ENCODE measurements at regions of chr17 and their contacts with region 1.

Region 1: DNA sequence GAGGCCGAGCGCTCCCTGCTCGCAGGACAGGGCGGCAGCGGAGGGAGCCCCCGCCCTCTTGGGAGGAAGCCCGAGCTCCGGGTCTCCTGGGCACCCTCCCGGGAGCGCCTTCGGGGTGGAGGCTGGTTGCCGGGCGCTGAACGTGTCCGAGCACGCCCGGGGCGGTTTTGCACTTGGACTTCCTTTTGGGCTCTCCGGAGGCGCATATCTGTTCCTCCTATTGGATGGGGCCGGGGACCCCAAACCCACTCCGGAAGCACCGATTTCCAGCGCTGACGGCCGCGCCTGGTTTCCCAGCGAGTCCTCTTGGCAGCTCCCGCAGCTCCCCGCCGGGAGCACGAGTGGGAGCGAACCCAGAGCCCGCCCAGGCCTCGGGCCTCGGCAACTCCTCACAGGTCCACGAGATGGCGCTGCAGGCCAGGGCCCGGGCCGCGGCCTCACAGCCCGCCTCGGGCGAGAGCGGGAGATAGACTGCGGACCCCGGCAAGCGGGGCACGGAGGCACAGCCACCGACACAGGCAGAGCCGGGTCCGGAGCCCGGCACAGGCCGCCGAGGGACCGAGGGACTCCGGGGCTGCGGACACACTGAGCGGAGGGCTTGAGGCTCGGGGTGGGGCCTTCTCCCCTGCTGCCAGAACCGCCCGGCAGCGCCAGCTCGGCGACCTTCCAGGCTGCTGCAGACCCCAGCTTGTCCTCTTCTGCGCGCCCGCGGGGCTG is 12.7 kb downstream of the TBX2 start:
- DNase-seq: peak; percentile 78
- ATAC-seq: peak; percentile 74
- H3K4me3 Mint-ChIP-seq: peak overlapping the region; percentile 46
- H3K27ac Mint-ChIP-seq: no peak overlapping the region
- H3K4me1 Mint-ChIP-seq: peaks cover 15% of the 10 kb centered on the region
- H3K27me3 Mint-ChIP-seq: peaks cover 39% of the 10 kb centered on the region

Region 2: GRCh38 chr17:61399131-61400057 is 12.9 kb before region 1 on chr17 and contains the start of gene TBX2:
- CTCF ChIA-PET with region 1: interaction called, 10 read pairs
- DNase-seq: no peak
- ATAC-seq: no peak
- H3K4me3 Mint-ChIP-seq: peak within 1 kb of the TSS; percentile 62
- H3K27ac Mint-ChIP-seq: peak within 1 kb of the TSS; percentile 68
- H3K4me1 Mint-ChIP-seq: peaks cover 30% of the 10 kb centered on the region
- H3K27me3 Mint-ChIP-seq: peaks cover 75% of the 10 kb centered on the region
- total RNA-seq, gene TBX2: not detected

Region 3: GRCh38 chr17:61426013-61426730 is 13.9 kb after region 1 on chr17:
- CTCF ChIA-PET with region 1: interaction called, 12 read pairs
- DNase-seq: no peak
- ATAC-seq: no peak
- H3K4me3 Mint-ChIP-seq: no peak overlapping the region
- H3K27ac Mint-ChIP-seq: no peak overlapping the region
- H3K4me1 Mint-ChIP-seq: no peaks in the 10 kb centered on the region
- H3K27me3 Mint-ChIP-seq: peaks cover 45% of the 10 kb centered on the region

Region 4: DNA sequence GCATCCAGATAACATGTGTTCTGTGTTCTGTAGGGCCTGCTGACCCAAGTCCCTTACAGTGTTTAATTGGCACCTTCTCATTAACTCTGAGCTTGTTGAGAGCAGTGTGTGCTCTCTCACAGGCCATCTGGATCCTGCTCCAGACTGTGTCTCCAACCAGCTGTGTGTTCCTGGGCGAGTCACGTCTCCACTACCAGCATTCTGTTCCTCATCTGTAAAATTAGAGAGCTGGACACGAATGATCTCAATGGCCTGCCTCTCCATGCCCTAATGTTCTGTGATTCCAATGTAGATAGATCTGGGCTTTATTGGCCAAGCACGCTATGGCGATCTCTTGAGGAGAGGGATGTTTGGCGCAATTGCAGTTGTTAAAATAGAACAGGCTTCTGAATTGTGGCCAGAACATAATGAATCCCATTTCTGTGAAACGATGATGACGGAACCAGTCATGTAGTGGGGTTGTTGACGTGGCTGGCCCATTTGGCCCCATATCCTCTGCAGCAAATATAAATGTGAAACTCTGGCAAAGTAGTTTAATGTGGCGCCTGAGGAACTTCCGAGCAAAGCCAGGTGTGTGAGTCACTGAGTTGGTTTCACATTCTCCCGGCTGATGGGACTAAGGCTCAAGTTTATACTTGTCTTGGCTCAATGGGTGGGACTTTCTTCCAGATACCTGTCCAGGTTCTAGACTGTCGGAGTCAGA is 62.1 kb after region 1 on chr17:
- CTCF ChIA-PET with region 1: no interaction called
- DNase-seq: no peak
- ATAC-seq: no peak
- H3K4me3 Mint-ChIP-seq: no peak overlapping the region
- H3K27ac Mint-ChIP-seq: no peak overlapping the region
- H3K4me1 Mint-ChIP-seq: peaks cover 2% of the 10 kb centered on the region
- H3K27me3 Mint-ChIP-seq: peaks cover 27% of the 10 kb centered on the region